ENCODE measurements at regions of chr4 and their contacts with region 1.

Region 1: DNA sequence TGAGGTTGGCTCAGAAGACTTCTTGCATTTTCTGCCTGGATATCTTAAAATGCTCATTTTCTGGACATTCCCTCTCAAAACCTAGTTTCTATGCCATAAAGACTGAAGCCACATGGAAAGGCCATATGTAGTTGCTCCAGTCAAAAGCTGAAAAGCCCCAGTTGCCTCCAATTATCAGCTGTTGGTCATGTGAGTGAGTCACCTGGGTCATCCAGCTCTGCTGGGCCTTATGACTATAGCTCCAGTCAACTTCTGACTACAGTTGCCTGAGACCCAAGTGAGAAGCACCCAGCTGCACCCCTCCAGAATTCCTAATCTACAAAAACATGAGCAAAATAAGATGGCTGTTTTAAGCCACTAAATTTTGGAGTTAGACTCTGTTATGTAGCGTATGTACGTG is 41.9 kb downstream of the HELQ start:
- DNase-seq: no peak
- ATAC-seq: no peak
- H3K4me3 ChIP-seq: no peak overlapping the region
- H3K4me3 Mint-ChIP-seq: no peak overlapping the region
- H3K27ac ChIP-seq: no peak overlapping the region
- H3K27ac Mint-ChIP-seq: no peak overlapping the region
- H3K4me1 ChIP-seq: no peaks in the 10 kb centered on the region
- H3K4me1 Mint-ChIP-seq: no peaks in the 10 kb centered on the region
- H3K27me3 ChIP-seq: no peaks in the 10 kb centered on the region
- H3K27me3 Mint-ChIP-seq: no peaks in the 10 kb centered on the region
- CTCF ChIP-seq: no peak

Region 2: GRCh38 chr4:82842593-82842992 is 571.1 kb before region 1 on chr4:
- CTCF ChIA-PET with region 1: no interaction called
- POLR2A ChIA-PET with region 1: no interaction called
- intact Hi-C with region 1: loop called in 1 of 2 experiments (anchors 10 kb)
- DNase-seq: peak in 2 of 9 experiments; percentile 11 to 29
- ATAC-seq: no peak
- H3K4me3 ChIP-seq: no peak overlapping the region
- H3K4me3 Mint-ChIP-seq: no peak overlapping the region
- H3K27ac ChIP-seq: no peak overlapping the region
- H3K27ac Mint-ChIP-seq: no peak overlapping the region
- H3K4me1 ChIP-seq: no peaks in the 10 kb centered on the region
- H3K4me1 Mint-ChIP-seq: no peaks in the 10 kb centered on the region
- H3K27me3 ChIP-seq: no peaks in the 10 kb centered on the region
- H3K27me3 Mint-ChIP-seq: no peaks in the 10 kb centered on the region
- CTCF ChIP-seq: no peak

Measured in CD8-positive, alpha-beta T cell (primary cell).